ENCODE measurements at regions of chr11 and their contacts with region 1.

Region 1: DNA sequence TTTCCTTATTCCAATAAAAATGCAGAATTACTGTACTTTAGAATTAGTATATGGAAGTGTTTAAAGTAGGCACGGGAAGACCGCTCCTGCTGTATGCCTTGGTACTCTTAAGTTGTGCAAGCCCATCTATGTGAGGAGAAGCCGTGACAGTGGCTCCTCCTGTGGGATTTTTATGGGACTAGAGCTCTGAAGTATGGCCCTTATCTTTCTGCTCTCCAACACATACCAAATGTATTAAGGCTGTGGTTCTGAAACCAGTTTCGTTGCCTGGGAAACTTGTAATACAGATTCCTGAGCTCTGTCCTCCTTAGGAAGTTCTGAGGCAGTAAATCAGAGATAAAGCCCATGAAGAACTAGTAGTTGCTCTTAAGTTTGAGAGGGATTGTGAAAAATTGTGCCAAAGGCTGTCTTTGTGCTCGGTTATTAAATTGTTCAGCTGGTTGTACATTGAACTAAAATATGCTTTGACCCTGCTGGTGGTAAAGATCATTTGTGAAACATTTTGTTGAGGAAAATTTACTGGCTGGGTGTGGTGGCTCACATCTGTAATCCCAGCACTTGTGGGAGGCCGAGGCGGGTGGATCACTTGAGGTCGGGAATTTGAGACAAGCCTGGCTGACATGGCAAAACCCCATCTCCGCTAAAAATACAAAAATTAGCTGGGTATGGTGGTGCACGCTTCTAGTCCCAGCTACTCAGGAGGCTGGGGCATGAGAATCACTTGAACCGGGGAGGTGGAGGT is 29.3 kb downstream of the RTN3 start:
- DNase-seq: peak; percentile 76 to 82
- H3K4me3 ChIP-seq: no peak overlapping the region
- H3K4me3 Mint-ChIP-seq: peak overlapping the region; percentile 64
- H3K27ac Mint-ChIP-seq: peak overlapping the region; percentile 98
- H3K4me1 ChIP-seq: peaks cover 8% of the 10 kb centered on the region
- H3K4me1 Mint-ChIP-seq: peaks cover 17% of the 10 kb centered on the region
- H3K27me3 ChIP-seq: no peaks in the 10 kb centered on the region
- H3K27me3 Mint-ChIP-seq: no peaks in the 10 kb centered on the region
- CTCF ChIP-seq: peak; percentile 41 to 43

Region 2: DNA sequence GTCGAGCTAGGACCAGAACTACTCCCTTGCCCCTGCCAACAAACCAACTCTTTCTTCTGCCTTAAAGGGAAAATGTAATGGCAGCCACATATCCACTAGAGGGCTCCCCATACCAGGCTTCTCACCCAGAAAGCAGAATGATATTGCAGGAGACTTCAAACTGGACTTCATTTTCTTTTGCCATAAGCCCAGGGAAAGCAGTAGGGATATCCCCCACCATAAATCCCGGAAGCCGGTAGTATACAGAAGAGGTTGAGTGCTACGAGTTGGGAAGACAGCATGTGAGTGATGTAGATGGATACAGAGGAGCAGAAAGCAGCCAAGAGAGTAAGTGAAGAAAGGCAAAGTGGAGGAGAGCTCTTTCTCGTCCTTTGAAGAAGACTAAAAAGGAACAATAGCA is 231.8 kb before region 1 on chr11:
- CTCF ChIA-PET with region 1: no interaction called
- POLR2A ChIA-PET with region 1: no interaction called
- intact Hi-C with region 1: no loop called
- DNase-seq: peak; percentile 74 to 80
- H3K4me3 ChIP-seq: no peak overlapping the region
- H3K4me3 Mint-ChIP-seq: no peak overlapping the region
- H3K27ac Mint-ChIP-seq: no peak overlapping the region
- H3K4me1 ChIP-seq: peaks cover 12% of the 10 kb centered on the region; the same call in 1 of the 2 replicates
- H3K4me1 Mint-ChIP-seq: no peaks in the 10 kb centered on the region
- H3K27me3 ChIP-seq: no peaks in the 10 kb centered on the region
- H3K27me3 Mint-ChIP-seq: no peaks in the 10 kb centered on the region
- CTCF ChIP-seq: peak; percentile 94

Region 3: DNA sequence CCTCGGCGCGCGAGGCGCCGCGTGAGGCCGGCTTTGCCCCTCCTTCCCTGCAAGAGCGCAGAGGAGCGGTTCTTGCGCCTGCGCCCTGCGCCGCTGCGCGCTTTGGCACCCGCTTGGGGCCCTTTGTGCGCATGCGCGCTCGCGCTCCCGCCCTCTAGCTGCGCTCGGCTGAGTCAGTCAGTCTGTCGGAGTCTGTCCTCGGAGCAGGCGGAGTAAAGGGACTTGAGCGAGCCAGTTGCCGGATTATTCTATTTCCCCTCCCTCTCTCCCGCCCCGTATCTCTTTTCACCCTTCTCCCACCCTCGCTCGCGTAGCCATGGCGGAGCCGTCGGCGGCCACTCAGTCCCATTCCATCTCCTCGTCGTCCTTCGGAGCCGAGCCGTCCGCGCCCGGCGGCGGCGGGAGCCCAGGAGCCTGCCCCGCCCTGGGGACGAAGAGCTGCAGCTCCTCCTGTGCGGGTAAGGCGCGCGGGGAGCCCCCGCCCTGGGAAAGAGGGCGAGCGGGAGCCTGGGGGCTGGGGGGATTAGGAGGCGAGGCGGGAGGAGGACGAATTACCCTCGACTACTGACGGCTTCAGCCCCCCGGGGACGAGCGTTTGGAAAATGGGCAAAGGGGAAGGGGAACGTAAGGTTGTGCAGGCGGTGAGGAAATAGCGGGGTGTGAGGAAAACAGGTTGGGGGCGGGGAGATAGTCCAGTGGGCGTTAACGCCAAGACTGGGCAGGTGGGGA is 29.2 kb before region 1 on chr11 and contains the start of gene RTN3:
- CTCF ChIA-PET with region 1: interaction called, 12 read pairs
- POLR2A ChIA-PET with region 1: interaction called, 7 read pairs
- intact Hi-C with region 1: loop called (anchors 1 kb)
- DNase-seq: peak; percentile 98 to 99
- H3K4me3 ChIP-seq: peak within 1 kb of the TSS; percentile 91
- H3K4me3 Mint-ChIP-seq: peak within 1 kb of the TSS; percentile 85
- H3K27ac Mint-ChIP-seq: peak within 1 kb of the TSS; percentile 68
- H3K4me1 ChIP-seq: peaks cover 5% of the 10 kb centered on the region
- H3K4me1 Mint-ChIP-seq: peaks cover 12% of the 10 kb centered on the region
- H3K27me3 ChIP-seq: no peaks in the 10 kb centered on the region
- H3K27me3 Mint-ChIP-seq: no peaks in the 10 kb centered on the region
- CTCF ChIP-seq: peak in 1 of 2 experiments; percentile 29
- total RNA-seq, gene RTN3: 162 and 179 TPM in 2 replicates

Measured in Caco-2 (cell line).